HEK293 (cell line): ENCODE measurements at regions of chrX and their contacts with region 1.

Region 1: DNA sequence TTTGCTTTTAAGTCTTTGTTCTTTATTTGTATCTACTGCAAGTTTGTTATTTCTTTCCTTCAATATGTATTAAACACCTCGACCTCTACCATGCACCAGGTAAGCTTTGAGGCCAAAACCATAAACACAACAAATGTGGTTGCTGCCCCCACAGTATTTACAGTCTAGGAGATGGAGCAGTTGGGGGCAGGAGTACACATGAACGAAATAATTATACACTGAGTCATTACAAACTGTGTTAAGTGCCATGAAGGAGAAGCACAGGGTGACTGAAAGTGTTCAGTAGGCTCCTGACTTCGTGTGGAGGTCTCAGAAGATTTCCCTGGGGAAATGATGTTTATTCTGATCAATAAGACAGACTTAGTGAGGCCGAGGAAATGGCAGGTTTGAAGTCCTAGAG is 30.3 kb downstream of the SLC25A43 start:
- H3K4me3 ChIP-seq: no peak overlapping the region
- H3K27ac ChIP-seq: no peak overlapping the region
- H3K4me1 ChIP-seq: no peaks in the 10 kb centered on the region
- CTCF ChIP-seq: no peak

Region 2: DNA sequence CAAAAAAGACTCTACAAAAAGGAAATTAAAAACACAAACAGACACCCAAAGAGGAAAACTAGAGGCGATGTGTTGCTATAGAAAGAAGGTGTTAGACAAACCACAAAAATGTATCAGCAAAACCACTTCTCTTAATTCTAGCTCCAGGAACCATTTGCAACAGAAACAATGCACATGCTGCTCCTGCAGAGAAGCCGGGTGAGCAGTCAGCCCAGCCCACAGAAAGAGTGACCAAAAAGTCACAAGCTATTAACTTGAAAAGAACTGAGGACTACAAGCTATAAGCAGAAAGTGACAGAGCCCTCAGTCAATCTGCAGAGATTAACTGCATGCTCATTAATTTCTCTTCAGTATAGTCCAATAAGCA is 1216.7 kb before region 1 on chrX:
- CTCF ChIA-PET with region 1: no interaction called
- POLR2A ChIA-PET with region 1: no interaction called
- H3K4me3 ChIP-seq: no peak overlapping the region
- H3K27ac ChIP-seq: no peak overlapping the region
- H3K4me1 ChIP-seq: no peaks in the 10 kb centered on the region
- CTCF ChIP-seq: no peak

Region 3: GRCh38 chrX:119292445-119292844 is 137.0 kb before region 1 on chrX:
- CTCF ChIA-PET with region 1: no interaction called
- POLR2A ChIA-PET with region 1: no interaction called
- H3K4me3 ChIP-seq: no peak overlapping the region
- H3K27ac ChIP-seq: no peak overlapping the region
- H3K4me1 ChIP-seq: no peaks in the 10 kb centered on the region
- CTCF ChIP-seq: no peak

Region 4: DNA sequence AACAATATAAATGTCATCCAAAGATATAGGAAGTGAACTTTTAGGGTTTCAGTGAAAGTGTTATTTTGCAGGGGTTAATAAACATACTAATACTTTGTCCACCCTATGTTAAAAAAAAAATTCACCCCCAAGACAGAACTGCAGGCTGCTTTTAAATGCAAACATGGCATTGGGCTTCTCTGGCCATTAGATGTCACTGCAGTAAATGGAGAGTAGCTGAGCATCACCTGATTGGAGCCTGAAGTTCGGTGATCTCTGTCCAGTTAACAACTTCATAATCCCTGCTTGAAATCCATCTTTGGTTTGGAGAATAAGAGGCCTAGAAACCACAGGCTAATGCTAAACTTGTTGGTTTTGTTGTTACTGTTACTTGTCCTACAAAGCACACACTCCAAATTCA is 11.6 kb before region 1 on chrX:
- CTCF ChIA-PET with region 1: interaction called, 10 read pairs
- POLR2A ChIA-PET with region 1: interaction called, 4 read pairs
- H3K4me3 ChIP-seq: no peak overlapping the region
- H3K27ac ChIP-seq: no peak overlapping the region
- H3K4me1 ChIP-seq: no peaks in the 10 kb centered on the region
- CTCF ChIP-seq: no peak